Activated B cell treated with CpG ODN at 0.5 μM for 24 hours (primary cell): ENCODE measurements at regions of chr2 and their contacts with region 1.

Region 1: GRCh38 chr2:198309673-198310280 is 505.4 kb downstream of the PLCL1 start:
- DNase-seq: no peak
- ATAC-seq: peak; percentile 52
- H3K4me3 Mint-ChIP-seq: no peak overlapping the region
- H3K27ac Mint-ChIP-seq: no peak overlapping the region
- H3K4me1 Mint-ChIP-seq: no peaks in the 10 kb centered on the region
- H3K27me3 Mint-ChIP-seq: peaks cover 10% of the 10 kb centered on the region
- CTCF ChIP-seq: no peak

Region 2: GRCh38 chr2:199273042-199273511 is 963.3 kb after region 1 on chr2:
- CTCF ChIA-PET with region 1: no interaction called
- POLR2A ChIA-PET with region 1: no interaction called
- intact Hi-C with region 1: no loop called
- DNase-seq: no peak
- ATAC-seq: no peak
- H3K4me3 Mint-ChIP-seq: no peak overlapping the region
- H3K27ac Mint-ChIP-seq: no peak overlapping the region
- H3K4me1 Mint-ChIP-seq: no peaks in the 10 kb centered on the region
- H3K27me3 Mint-ChIP-seq: no peaks in the 10 kb centered on the region
- CTCF ChIP-seq: no peak

Region 3: DNA sequence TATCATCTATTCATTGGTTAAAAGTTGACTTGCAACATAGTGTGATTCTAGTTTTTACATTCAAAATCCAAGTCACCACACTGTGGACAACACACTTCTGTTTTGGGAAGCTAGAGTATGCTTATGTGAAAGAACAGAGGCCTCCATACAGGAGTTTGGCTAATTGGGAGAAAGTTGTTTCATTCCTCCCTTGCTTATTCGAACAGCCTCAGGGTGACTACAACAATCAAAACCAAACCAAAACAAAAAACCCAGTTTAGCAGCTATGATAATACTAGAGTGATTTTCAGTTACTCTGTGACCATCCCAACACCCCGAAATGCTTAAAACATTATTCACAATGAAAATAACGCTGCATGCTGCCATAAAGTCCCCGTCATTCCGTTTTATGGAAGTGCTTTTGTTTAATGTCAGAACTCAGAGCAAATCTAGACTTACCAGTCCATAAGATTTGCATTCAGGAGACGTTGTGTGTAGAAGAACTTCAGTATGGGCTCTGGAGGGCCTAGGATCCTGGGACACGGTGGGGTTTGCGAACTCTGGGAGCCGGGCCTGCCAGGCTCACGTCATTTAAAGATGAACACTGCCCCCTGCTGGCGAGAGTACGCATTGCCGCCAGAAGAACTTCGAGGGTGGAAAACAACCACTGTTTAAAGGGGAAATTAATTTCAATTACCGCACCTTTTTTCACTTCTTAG is 1429.8 kb after region 1 on chr2:
- CTCF ChIA-PET with region 1: interaction called, 36 read pairs
- POLR2A ChIA-PET with region 1: no interaction called
- intact Hi-C with region 1: loop called (anchors 1 kb)
- DNase-seq: peak; percentile 35
- ATAC-seq: peak; percentile 45
- H3K4me3 Mint-ChIP-seq: no peak overlapping the region
- H3K27ac Mint-ChIP-seq: no peak overlapping the region
- H3K4me1 Mint-ChIP-seq: peaks cover 4% of the 10 kb centered on the region
- H3K27me3 Mint-ChIP-seq: peaks cover 19% of the 10 kb centered on the region
- CTCF ChIP-seq: peak; percentile 90